ENCODE measurements at regions of chr13 and their contacts with region 1.

Region 1: DNA sequence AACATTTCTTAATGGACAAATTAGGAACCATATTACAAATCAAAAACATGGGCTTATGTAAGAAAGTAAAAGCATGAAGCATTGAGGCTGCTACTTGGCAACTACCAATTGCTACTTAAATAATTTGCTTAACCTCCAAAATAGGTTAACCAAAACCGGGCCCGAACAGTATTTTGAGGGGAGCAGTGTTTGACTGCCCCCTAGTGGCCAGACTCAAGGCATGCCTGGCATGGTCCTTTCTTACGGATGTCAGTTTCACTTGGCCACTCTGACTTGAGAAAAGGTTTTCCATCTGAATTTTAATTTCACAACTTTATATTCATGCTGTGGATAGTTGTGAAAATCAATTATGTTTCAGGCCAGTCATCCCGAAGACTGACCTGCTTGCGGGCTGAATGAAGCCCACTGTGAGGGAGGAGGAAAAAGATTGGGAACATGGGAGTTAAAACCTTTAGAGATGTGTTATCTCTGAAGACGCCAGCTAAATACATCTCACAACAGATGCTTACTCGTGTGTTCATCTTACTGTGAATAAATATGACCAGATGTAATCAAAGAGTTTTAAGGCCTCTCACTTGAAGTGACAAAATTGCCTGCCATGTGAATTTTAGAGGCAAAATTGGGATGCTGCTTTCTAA is 2.9 kb downstream of the RXFP2 start:
- DNase-seq: peak; percentile 29 to 78 (median 50)
- ATAC-seq: peak; percentile 68
- H3K4me3 ChIP-seq: no peak overlapping the region
- H3K4me3 Mint-ChIP-seq: no peak overlapping the region
- H3K27ac ChIP-seq: no peak overlapping the region
- H3K27ac Mint-ChIP-seq: no peak overlapping the region
- H3K4me1 ChIP-seq: no peaks in the 10 kb centered on the region
- H3K4me1 Mint-ChIP-seq: peaks cover 4% of the 10 kb centered on the region
- H3K27me3 ChIP-seq: no peaks in the 10 kb centered on the region
- H3K27me3 Mint-ChIP-seq: peaks cover 22% of the 10 kb centered on the region
- CTCF ChIP-seq: peak; percentile 99

Region 2: GRCh38 chr13:31431722-31432137 is 310.5 kb before region 1 on chr13:
- CTCF ChIA-PET with region 1: no interaction called
- POLR2A ChIA-PET with region 1: no interaction called
- intact Hi-C with region 1: loop called (anchors 1 to 2 kb)
- DNase-seq: peak; percentile 5 to 62 (median 22)
- ATAC-seq: no peak
- H3K4me3 ChIP-seq: no peak overlapping the region
- H3K4me3 Mint-ChIP-seq: no peak overlapping the region
- H3K27ac ChIP-seq: no peak overlapping the region
- H3K27ac Mint-ChIP-seq: no peak overlapping the region
- H3K4me1 ChIP-seq: no peaks in the 10 kb centered on the region
- H3K4me1 Mint-ChIP-seq: no peaks in the 10 kb centered on the region
- H3K27me3 ChIP-seq: peaks cover 0 to 4% of the 10 kb centered on the region in 2 experiments
- H3K27me3 Mint-ChIP-seq: peaks cover 10% of the 10 kb centered on the region
- CTCF ChIP-seq: peak; percentile 78

Measured in CD4-positive, alpha-beta T cell (primary cell).